Activated CD4-positive, alpha-beta T cell treated with anti-CD3 and anti-CD28 coated beads for 36 hours (primary cell): ENCODE measurements at regions of chr20 and their contacts with region 1.

Region 1: GRCh38 chr20:40010483-40010882 is 678.6 kb downstream of the MAFB start:
- DNase-seq: no peak
- ATAC-seq: no peak
- H3K4me3 Mint-ChIP-seq: no peak overlapping the region
- H3K27ac Mint-ChIP-seq: no peak overlapping the region
- H3K4me1 Mint-ChIP-seq: no peaks in the 10 kb centered on the region
- H3K27me3 Mint-ChIP-seq: peaks cover 6% of the 10 kb centered on the region

Region 2: GRCh38 chr20:39954621-39955020 is 55.9 kb before region 1 on chr20:
- CTCF ChIA-PET with region 1: no interaction called
- POLR2A ChIA-PET with region 1: no interaction called
- intact Hi-C with region 1: loop called in 1 of 2 experiments (anchors 10 kb)
- DNase-seq: no peak
- ATAC-seq: no peak
- H3K4me3 Mint-ChIP-seq: no peak overlapping the region
- H3K27ac Mint-ChIP-seq: no peak overlapping the region
- H3K4me1 Mint-ChIP-seq: no peaks in the 10 kb centered on the region
- H3K27me3 Mint-ChIP-seq: no peaks in the 10 kb centered on the region